Colonic mucosa (tissue), 4 donors: ENCODE measurements at regions of chr12 and their contacts with region 1.

Region 1: DNA sequence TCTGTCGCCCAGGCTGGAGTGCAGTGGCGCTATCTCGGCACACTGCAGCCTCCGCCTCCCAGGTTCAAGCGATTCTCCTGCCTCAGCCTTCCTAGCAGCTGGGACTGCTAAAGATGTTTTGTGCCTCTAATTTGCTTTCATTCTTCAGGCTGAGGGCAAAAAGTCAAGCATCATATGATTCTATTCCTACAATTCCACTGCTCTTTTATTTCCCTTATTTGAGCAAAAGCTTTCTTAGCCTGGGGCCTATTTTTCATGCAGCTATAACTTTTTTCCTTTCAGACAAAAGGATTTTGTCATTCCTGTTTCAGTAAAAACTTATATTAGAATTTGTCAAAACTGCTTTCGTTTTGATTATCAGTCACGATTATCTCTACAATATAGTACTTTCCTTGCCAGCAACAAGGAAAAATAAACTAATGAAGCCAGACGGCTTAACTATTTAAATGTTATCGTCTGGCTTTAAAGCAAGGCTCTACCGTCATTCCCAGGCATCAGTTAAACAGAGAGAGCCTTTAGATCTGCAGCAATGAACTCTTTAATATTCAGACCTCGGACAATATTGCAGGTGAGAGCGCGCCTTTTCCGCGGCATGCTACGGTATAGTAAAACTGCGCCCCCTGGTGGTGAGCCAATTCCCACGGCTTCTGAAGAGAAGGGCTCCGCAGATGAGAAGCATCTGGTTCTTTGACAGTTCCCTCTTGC is 1.4 kb upstream of the SLC2A13 start:
- DNase-seq: peak; percentile 93
- H3K4me3 ChIP-seq: peak overlapping the region; percentile 17
- H3K27ac ChIP-seq: no peak overlapping the region
- H3K4me1 ChIP-seq: peaks cover 4% of the 10 kb centered on the region
- H3K27me3 ChIP-seq: no peaks in the 10 kb centered on the region
- CTCF ChIP-seq: peak; percentile 93

Region 2: GRCh38 chr12:39764944-39765560 is 342.2 kb before region 1 on chr12:
- intact Hi-C with region 1: loop called (anchors 5 kb)
- DNase-seq: no peak
- H3K4me3 ChIP-seq: no peak overlapping the region
- H3K27ac ChIP-seq: no peak overlapping the region
- H3K4me1 ChIP-seq: no peaks in the 10 kb centered on the region
- H3K27me3 ChIP-seq: no peaks in the 10 kb centered on the region
- CTCF ChIP-seq: peak; percentile 84

Region 3: GRCh38 chr12:40010899-40011774 is 96.1 kb before region 1 on chr12:
- intact Hi-C with region 1: loop called (anchors 2 kb)
- DNase-seq: peak; percentile 77
- H3K4me3 ChIP-seq: no peak overlapping the region
- H3K27ac ChIP-seq: no peak overlapping the region
- H3K4me1 ChIP-seq: peaks cover 14% of the 10 kb centered on the region
- H3K27me3 ChIP-seq: no peaks in the 10 kb centered on the region
- CTCF ChIP-seq: peak; percentile 87

Region 4: GRCh38 chr12:40063414-40063813 is 43.8 kb before region 1 on chr12:
- intact Hi-C with region 1: no loop called
- DNase-seq: no peak
- H3K4me3 ChIP-seq: no peak overlapping the region
- H3K27ac ChIP-seq: no peak overlapping the region
- H3K4me1 ChIP-seq: no peaks in the 10 kb centered on the region
- H3K27me3 ChIP-seq: no peaks in the 10 kb centered on the region
- CTCF ChIP-seq: no peak

Region 5: GRCh38 chr12:40502322-40502721 is 395.1 kb after region 1 on chr12:
- intact Hi-C with region 1: no loop called
- DNase-seq: no peak
- H3K4me3 ChIP-seq: no peak overlapping the region
- H3K27ac ChIP-seq: no peak overlapping the region
- H3K4me1 ChIP-seq: no peaks in the 10 kb centered on the region
- H3K27me3 ChIP-seq: no peaks in the 10 kb centered on the region
- CTCF ChIP-seq: no peak